CD4-positive, alpha-beta memory T cell (primary cell): ENCODE measurements at regions of chr20 and their contacts with region 1.

Region 1: DNA sequence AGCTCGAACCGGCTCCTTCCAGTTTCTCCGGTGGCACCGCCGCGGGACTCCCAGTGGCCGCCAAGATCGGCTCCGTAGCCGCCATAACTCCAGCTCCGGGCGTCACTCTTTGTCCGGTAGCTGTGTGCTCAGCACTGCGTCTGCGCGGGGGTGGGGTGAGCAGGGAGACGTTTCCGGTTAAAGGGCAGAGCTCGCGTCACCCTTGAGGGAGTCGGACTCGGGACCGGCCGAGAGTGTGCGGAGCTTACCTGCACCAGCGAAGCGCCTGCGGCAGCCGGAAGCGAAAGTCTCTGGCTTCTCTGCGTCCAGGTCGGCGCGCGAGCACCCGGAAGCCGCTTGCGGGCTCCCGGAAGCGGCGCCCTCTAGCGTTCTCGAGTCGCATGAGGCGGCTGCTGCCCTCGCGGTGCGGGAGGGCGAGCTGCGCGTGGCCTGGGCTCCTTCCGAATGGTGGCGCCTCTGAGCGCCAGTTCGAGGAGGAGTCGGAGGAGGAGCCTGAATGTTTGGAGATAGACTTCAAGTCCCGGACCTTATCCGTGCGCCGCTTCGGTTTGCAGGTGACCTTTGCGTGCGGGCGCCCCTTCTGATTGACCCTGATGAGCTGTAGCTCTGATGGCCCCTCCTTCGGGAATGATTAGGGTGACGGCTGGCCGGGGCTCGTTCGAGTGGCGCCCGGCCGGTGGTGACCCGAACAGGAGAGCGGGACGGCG is at the start of gene SCAND1:
- DNase-seq: peak; percentile 97 to 99 (median 98)
- H3K4me3 ChIP-seq: peak within 1 kb of the TSS; percentile 64 to 96
- H3K4me3 Mint-ChIP-seq: peak within 1 kb of the TSS; percentile 99 to 100 (median 99)
- H3K27ac ChIP-seq: peak within 1 kb of the TSS; percentile 96
- H3K27ac Mint-ChIP-seq: peak within 1 kb of the TSS; percentile 99 to 100 (median 99)
- H3K4me1 ChIP-seq: peaks cover 25% of the 10 kb centered on the region
- H3K4me1 Mint-ChIP-seq: peaks cover 6 to 35% (median 14%) of the 10 kb centered on the region in 4 donors
- H3K27me3 ChIP-seq: no peaks in the 10 kb centered on the region
- H3K27me3 Mint-ChIP-seq: no peaks in the 10 kb centered on the region
- total RNA-seq, gene SCAND1: 45.1 to 53.8 TPM

Region 2: DNA sequence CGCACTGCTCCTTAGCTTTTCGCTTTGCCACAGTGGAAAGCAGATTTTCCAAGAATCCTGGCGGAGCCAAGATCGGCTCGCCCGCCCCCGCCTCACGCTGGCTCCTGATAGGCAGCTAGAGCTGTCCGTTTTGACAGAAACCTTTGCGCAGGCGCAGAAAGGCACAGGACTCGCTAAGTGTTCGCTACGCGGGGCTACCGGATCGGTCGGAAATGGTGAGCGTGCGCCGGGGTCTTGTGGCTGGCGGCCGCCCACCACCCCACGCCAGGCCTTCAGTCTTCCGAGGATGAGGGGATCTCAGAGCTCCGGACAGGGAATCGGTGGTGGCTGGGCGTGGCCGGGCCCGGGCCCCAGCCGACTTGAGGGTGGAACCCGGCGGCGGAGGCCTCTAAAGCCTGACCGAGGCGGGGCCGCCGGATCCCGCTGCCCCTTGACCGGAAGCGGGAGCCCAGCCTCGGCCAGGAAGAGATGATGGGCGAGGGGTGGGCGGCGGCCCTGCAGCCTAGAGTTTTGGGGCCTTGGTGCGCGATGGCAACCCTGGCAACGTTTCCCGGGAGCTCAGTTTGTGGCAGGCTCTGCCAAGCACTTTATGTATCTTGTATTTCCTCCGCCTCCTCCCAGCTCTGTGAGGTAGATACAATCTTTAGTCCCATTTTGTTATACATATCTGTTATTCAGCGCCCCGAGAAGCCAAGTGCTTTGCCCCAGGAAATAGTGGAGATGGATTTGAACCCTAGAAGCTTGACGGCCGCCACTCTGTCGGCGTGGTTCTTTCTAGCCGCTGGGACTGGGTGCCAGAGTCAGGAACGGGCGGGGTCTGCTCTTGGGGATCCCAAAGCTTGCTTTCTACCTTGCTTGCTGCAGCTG is 1437.9 kb before region 1 on chr20 and contains the start of gene DYNLRB1:
- CTCF ChIA-PET with region 1: no interaction called
- POLR2A ChIA-PET with region 1: interaction called, 11 read pairs
- intact Hi-C with region 1: no loop called
- DNase-seq: peak; percentile 92 to 96 (median 93)
- H3K4me3 ChIP-seq: peak within 1 kb of the TSS; percentile 91 to 99
- H3K4me3 Mint-ChIP-seq: peak within 1 kb of the TSS; percentile 93 to 100 (median 98)
- H3K27ac ChIP-seq: peak within 1 kb of the TSS; percentile 89
- H3K27ac Mint-ChIP-seq: peak within 1 kb of the TSS; percentile 96 to 99 (median 98)
- H3K4me1 ChIP-seq: peaks cover 46% of the 10 kb centered on the region
- H3K4me1 Mint-ChIP-seq: peaks cover 29 to 91% (median 52%) of the 10 kb centered on the region in 4 donors
- H3K27me3 ChIP-seq: no peaks in the 10 kb centered on the region
- H3K27me3 Mint-ChIP-seq: no peaks in the 10 kb centered on the region
- total RNA-seq, gene DYNLRB1: 75.5 to 81.0 TPM

Region 3: DNA sequence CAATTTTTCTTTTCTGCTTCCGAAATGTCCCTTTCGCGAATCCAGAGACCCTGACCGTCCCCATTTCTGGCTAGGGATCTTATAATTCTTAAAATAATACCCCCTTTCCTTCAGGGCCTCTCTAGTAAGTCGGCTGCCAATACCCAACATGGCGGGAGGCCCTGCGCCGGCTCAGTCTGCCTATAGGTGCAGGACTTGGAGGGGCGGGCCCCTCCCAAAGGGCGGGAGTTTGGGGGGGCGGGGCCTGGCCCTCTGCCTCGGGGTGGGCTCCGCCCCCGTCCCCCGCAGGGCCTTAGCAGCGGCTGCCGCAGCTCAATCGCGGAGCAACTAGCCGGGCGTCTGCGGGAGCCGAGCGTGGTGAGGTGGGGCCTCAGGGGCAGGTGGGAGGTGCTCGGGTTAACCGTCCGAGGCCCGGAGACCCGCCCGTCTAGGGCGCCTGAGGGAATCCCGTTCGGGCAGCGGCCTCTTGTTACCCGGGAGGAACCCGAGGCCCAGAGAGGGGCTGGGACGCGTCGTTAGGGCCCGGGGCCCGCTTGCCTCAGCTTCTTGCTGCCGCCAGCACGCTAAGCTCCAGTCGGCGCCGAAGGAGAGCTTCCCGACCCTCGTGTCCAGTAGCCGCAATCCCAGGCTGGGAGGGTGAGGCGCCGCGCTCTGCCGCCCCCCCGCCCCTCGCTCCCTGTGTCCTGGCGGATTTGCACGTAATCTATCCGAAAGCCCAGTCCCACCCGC is 499.3 kb before region 1 on chr20 and contains the start of gene CEP250:
- CTCF ChIA-PET with region 1: interaction called, 14 read pairs
- POLR2A ChIA-PET with region 1: interaction called, 26 read pairs
- intact Hi-C with region 1: loop called (anchors 1 kb)
- DNase-seq: peak; percentile 94 to 96 (median 96)
- H3K4me3 ChIP-seq: peak within 1 kb of the TSS; percentile 80 to 82
- H3K4me3 Mint-ChIP-seq: peak within 1 kb of the TSS; percentile 92 to 99 (median 97)
- H3K27ac ChIP-seq: peak within 1 kb of the TSS; percentile 95
- H3K27ac Mint-ChIP-seq: peak within 1 kb of the TSS; percentile 95 to 99 (median 98)
- H3K4me1 ChIP-seq: no peaks in the 10 kb centered on the region
- H3K4me1 Mint-ChIP-seq: peaks cover 7 to 29% (median 19%) of the 10 kb centered on the region in 4 donors
- H3K27me3 ChIP-seq: no peaks in the 10 kb centered on the region
- H3K27me3 Mint-ChIP-seq: no peaks in the 10 kb centered on the region
- total RNA-seq, gene CEP250: 71.3 to 76.9 TPM

Region 4: DNA sequence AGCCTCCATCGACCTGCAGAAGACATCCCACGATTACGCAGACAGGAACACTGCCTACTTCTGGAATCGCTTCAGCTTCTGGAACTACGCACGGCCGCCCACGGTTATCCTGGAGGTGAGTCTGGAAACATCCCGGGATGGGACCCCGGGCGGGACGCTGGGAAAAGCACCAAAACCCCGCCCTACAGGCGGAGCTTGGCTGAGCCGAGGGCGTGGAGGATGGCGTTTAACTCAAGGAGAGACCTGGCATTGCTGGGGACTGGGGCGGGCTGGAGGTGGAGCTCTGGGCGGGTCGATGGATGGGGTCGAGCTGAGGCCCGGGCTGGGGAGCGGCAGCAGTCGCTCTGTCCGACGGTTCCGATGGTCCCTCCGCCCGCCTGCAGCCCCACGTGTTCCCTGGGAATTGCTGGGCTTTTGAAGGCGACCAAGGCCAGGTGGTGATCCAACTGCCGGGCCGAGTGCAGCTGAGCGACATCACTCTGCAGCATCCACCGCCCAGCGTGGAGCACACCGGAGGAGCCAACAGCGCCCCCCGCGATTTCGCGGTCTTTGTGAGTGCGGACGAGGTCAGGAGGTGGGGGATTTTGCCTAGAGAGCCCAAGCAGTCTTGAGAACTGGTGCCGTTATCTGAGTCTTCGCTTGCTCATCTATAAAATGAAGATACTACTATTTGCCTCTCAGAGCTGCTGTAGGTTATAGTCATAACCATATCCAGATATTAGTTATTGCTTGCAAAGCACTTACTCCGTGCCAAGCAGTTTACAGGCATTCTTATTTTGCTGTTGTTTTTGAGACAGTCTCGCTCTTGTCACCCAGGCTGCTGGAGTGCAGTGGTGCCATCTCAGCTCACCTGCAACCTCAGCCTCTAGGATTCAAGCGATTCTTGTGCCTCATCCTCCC is 334.9 kb before region 1 on chr20:
- CTCF ChIA-PET with region 1: interaction called, 4 read pairs
- POLR2A ChIA-PET with region 1: interaction called, 17 read pairs
- intact Hi-C with region 1: loop called (anchors 5 kb)
- DNase-seq: peak; percentile 71 to 81 (median 76)
- H3K4me3 ChIP-seq: peak overlapping the region; percentile 36 to 75
- H3K4me3 Mint-ChIP-seq: peak overlapping the region; percentile 84 to 97 (median 90)
- H3K27ac ChIP-seq: peak overlapping the region; percentile 40
- H3K27ac Mint-ChIP-seq: peak overlapping the region; percentile 83 to 99 (median 89)
- H3K4me1 ChIP-seq: peaks cover 39% of the 10 kb centered on the region
- H3K4me1 Mint-ChIP-seq: peaks cover 17 to 47% (median 33%) of the 10 kb centered on the region in 4 donors
- H3K27me3 ChIP-seq: no peaks in the 10 kb centered on the region
- H3K27me3 Mint-ChIP-seq: peaks cover 0 to 3% of the 10 kb centered on the region in 2 donors

Region 5: GRCh38 chr20:35718972-35719635 is 235.2 kb before region 1 on chr20:
- CTCF ChIA-PET with region 1: no interaction called
- POLR2A ChIA-PET with region 1: no interaction called
- intact Hi-C with region 1: no loop called
- DNase-seq: no peak
- H3K4me3 ChIP-seq: no peak overlapping the region
- H3K4me3 Mint-ChIP-seq: peak overlapping the region in 1 of 8 donors; percentile 17
- H3K27ac ChIP-seq: no peak overlapping the region
- H3K27ac Mint-ChIP-seq: peak overlapping the region in 5 of 7 donors; percentile 24 to 73 (median 46)
- H3K4me1 ChIP-seq: peaks cover 64% of the 10 kb centered on the region
- H3K4me1 Mint-ChIP-seq: peaks cover 31 to 64% (median 46%) of the 10 kb centered on the region in 4 donors
- H3K27me3 ChIP-seq: no peaks in the 10 kb centered on the region
- H3K27me3 Mint-ChIP-seq: no peaks in the 10 kb centered on the region

Region 6: GRCh38 chr20:35942243-35942642 is 12.1 kb before region 1 on chr20:
- CTCF ChIA-PET with region 1: interaction called, 19 read pairs
- POLR2A ChIA-PET with region 1: interaction called, 16 read pairs
- intact Hi-C with region 1: no loop called
- DNase-seq: no peak
- H3K4me3 ChIP-seq: no peak overlapping the region
- H3K4me3 Mint-ChIP-seq: no peak overlapping the region
- H3K27ac ChIP-seq: no peak overlapping the region
- H3K27ac Mint-ChIP-seq: peak overlapping the region in 5 of 7 donors; percentile 28 to 73 (median 48)
- H3K4me1 ChIP-seq: no peaks in the 10 kb centered on the region
- H3K4me1 Mint-ChIP-seq: peaks cover 0 to 4% (median under 1%) of the 10 kb centered on the region in 4 donors
- H3K27me3 ChIP-seq: no peaks in the 10 kb centered on the region
- H3K27me3 Mint-ChIP-seq: no peaks in the 10 kb centered on the region

Region 7: GRCh38 chr20:36573103-36573794 is 618.9 kb after region 1 on chr20 and contains the start of gene TGIF2:
- CTCF ChIA-PET with region 1: no interaction called
- POLR2A ChIA-PET with region 1: interaction called, 7 read pairs
- intact Hi-C with region 1: loop called (anchors 10 kb)
- DNase-seq: peak; percentile 87 to 92 (median 89)
- H3K4me3 ChIP-seq: peak within 1 kb of the TSS; percentile 47 to 73
- H3K4me3 Mint-ChIP-seq: peak within 1 kb of the TSS; percentile 89 to 96 (median 92)
- H3K27ac ChIP-seq: peak within 1 kb of the TSS; percentile 100
- H3K27ac Mint-ChIP-seq: peak within 1 kb of the TSS; percentile 95 to 99 (median 99)
- H3K4me1 ChIP-seq: peaks cover 35% of the 10 kb centered on the region
- H3K4me1 Mint-ChIP-seq: peaks cover 24 to 46% (median 30%) of the 10 kb centered on the region in 4 donors
- H3K27me3 ChIP-seq: no peaks in the 10 kb centered on the region
- H3K27me3 Mint-ChIP-seq: no peaks in the 10 kb centered on the region
- total RNA-seq, gene TGIF2: 31.7 to 35.0 TPM